GM12878 (cell line): ENCODE measurements at regions of chr22 and their contacts with region 1.

Region 1: DNA sequence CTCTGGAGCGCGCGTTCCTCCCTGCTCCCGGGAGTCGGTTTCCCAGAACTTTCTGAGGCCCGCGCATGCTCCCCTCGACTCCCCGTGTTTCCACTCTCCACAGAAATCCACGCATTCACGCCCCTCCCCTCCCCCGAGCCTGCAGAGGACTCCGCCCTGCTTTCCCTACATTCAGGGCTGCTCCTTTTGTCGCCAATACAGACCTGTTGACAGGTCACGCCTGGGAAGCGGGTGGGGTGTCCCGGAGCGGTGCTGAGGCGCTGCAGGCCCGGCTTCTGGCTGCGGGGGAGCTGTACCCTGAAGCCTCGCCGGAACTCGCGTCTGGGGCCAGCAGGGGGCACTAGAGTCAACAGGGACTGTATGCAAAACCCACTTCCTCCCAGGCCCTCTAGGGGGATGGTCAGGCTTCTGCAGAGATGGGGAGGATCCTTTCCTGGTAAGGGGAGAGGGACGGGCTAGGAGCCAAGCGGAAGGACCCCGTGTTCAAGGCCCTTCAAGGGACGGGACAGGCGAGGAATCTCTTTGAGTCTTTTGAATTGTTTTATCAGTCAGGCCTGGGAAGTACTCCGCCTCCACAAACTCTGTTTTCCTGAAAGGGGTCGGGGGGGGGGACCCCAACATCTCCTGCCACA is at the start of gene PRAME:
- DNase-seq: peak; percentile 11
- ATAC-seq: peak; percentile 96
- H3K4me3 ChIP-seq: no peak within 1 kb of the TSS
- H3K27ac ChIP-seq: no peak within 1 kb of the TSS
- H3K4me1 ChIP-seq: no peaks in the 10 kb centered on the region
- H3K27me3 ChIP-seq: no peaks in the 10 kb centered on the region
- CTCF ChIP-seq: peak; percentile 68 to 81 (median 79)
- EP300 ChIP-seq: no peak
- POLR2A ChIP-seq: peak; percentile 20; the same call in 1 of the 2 replicates
- RAD21 ChIP-seq: no peak
- polyA plus RNA-seq, gene PRAME: 0.40 to 0.68 TPM

Region 2: DNA sequence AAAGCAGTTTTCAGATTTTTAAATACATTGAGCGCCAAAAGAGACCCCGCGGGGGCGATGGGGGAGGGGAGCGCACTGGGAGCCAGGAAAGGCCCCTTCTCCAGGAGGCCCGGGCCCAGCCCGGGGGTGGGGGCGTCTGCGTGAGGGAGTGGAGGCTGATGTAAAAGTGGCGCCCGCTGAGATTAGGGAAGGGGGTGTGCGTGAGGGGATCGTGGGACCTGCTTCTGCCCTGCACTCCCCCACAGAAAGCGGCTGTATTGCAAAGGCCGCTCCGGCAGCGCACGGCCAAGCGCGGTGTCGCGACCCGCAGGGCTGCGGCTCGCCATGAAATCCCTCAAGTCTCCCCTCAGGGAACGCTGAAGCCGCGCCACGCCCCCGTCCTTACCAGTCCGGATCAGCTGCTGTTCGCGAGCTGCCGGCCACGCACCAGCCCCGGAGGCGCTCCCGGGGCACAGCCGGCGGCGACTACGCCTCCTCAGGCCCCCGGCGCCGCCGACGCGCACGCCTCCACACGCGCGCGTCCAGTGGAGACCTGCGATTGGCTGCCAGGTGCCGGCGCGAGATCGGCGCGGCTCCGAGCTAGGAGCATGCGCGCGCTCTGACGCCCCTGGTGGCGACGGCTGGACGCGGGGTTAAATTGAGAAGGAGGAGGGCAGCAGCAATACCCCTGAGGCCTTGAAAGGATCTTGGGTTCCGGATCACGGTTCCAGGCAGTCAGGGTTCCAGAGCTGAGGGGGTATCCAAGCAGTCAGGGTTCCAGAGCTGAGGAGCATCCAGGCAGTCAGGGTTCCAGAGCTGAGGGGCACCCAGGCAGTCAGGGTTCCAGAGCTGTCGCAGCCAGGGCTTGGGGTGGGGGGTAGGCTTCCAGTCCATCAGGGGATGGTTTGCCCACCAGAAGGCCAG is 50.6 kb before region 1 on chr22 and contains the start of gene ZNF280B:
- CTCF ChIA-PET with region 1: interaction called, 3 read pairs
- POLR2A ChIA-PET with region 1: no interaction called
- RAD21 ChIA-PET with region 1: no interaction called
- SMC1A ChIA-PET with region 1: no interaction called
- in situ Hi-C with region 1: no loop called
- intact Hi-C with region 1: loop called (anchors 1 kb)
- DNase-seq: peak; percentile 43
- ATAC-seq: peak; percentile 100
- H3K4me3 ChIP-seq: peak within 1 kb of the TSS; percentile 77
- H3K27ac ChIP-seq: no peak within 1 kb of the TSS
- H3K4me1 ChIP-seq: no peaks in the 10 kb centered on the region
- H3K27me3 ChIP-seq: no peaks in the 10 kb centered on the region
- CTCF ChIP-seq: peak; percentile 55 to 66 (median 66)
- EP300 ChIP-seq: no peak
- POLR2A ChIP-seq: peak; percentile 74
- RAD21 ChIP-seq: no peak
- polyA plus RNA-seq, gene ZNF280B: 0.49 to 1.2 TPM

Region 3: DNA sequence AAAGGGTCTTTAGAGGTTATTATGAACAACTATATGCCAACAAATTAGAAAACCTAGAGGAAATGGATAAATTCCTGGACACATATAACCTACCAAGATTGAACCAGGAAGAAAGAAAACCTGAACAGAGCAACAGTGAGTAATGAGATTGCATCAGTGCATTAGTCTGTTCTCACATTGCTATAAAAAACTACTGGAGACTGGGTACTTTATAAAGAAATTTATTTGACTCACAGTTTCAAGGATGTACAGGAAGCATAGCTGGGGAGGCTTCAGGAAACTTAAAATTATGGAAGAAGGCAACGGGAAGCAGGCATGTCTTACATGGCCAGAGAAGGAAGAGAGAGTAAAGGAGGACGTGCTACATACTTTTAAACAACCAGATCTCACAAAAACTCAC is 440.4 kb after region 1 on chr22:
- CTCF ChIA-PET with region 1: no interaction called
- POLR2A ChIA-PET with region 1: no interaction called
- RAD21 ChIA-PET with region 1: no interaction called
- SMC1A ChIA-PET with region 1: no interaction called
- in situ Hi-C with region 1: no loop called
- intact Hi-C with region 1: no loop called
- DNase-seq: no peak
- ATAC-seq: no peak
- H3K4me3 ChIP-seq: no peak overlapping the region
- H3K27ac ChIP-seq: no peak overlapping the region
- H3K4me1 ChIP-seq: no peaks in the 10 kb centered on the region
- H3K27me3 ChIP-seq: no peaks in the 10 kb centered on the region
- CTCF ChIP-seq: no peak
- EP300 ChIP-seq: no peak
- POLR2A ChIP-seq: no peak
- RAD21 ChIP-seq: no peak